Stomach (tissue), 19 donors: ENCODE measurements at regions of chr7 and their contacts with region 1.

Region 1: GRCh38 chr7:151168003-151168786 is 701 bp upstream of the GBX1 start:
- DNase-seq: peak; percentile 42 to 76
- H3K4me3 ChIP-seq: peak overlapping the region; percentile 46 to 66 (median 50)
- H3K27ac ChIP-seq: no peak overlapping the region
- H3K4me1 ChIP-seq: peaks cover 18 to 28% (median 23%) of the 10 kb centered on the region in 4 donors
- H3K27me3 ChIP-seq: peaks cover 16 to 93% (median 57%) of the 10 kb centered on the region in 3 donors
- CTCF ChIP-seq: peak in 4 of 7 experiments; percentile 31 to 70 (median 55)
- EP300 ChIP-seq: no peak
- POLR2A ChIP-seq: no peak

Region 2: DNA sequence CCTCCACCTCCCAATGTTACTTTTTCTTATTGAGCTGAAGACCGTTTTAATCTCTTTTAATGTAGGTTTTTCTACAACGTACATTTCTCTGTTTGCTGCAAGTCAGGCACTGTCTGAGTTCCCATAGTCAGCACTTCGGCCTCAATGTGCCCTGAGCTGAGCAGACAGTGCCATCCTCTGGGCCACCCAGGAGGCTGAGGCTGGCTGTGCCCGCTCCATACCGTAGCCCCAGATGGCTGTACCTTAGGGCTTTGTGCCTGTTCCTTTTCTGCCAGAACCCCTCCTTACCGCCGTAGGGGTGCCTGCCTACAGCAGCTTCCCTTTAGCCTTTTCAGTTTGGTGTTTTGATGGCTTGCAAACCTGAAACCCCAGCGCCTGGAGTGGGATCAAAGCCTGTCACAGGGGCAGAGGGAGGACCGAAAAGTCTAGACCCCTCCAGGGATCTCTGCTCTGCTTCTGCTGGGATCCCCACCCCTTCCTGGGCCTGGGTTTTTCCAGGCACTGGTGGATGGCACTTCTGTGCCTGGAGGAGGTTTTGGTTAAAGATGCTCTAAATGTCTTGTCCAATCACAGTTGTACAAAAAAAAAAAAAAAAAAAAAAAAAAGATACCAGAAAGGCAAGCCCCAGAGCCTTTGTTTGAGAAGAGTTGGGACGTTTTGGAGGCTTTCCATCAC is 72.9 kb before region 1 on chr7:
- intact Hi-C with region 1: no loop called
- DNase-seq: no peak
- H3K4me3 ChIP-seq: no peak overlapping the region
- H3K27ac ChIP-seq: peak overlapping the region in 1 of 5 donors; percentile 46
- H3K4me1 ChIP-seq: peaks cover under 1 to 56% (median 32%) of the 10 kb centered on the region in 4 donors
- H3K27me3 ChIP-seq: no peaks in the 10 kb centered on the region
- CTCF ChIP-seq: no peak
- EP300 ChIP-seq: no peak
- POLR2A ChIP-seq: no peak

Region 3: DNA sequence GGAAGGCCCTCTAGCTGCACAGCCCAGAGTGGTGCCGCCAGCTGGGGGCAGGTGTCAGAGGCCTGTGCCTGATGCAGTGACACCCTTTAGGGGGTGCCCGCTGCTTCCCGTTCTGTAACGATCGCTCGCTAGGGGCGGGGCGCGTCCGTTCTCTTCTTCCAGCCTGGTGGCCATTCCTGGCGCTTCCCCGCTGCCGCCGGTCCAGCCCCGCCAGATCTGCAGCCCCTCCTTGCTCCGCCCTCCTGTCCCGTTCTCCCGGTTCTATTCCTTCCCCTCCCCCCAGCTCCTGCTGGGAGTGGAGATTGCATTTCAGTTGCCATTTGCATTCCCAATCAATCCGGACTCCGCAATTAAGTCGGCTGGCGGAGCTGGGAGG is 42.7 kb before region 1 on chr7:
- intact Hi-C with region 1: loop called (anchors 5 kb)
- DNase-seq: peak; percentile 45 to 75
- H3K4me3 ChIP-seq: peak overlapping the region; percentile 40 to 48 (median 44)
- H3K27ac ChIP-seq: peak overlapping the region in 1 of 5 donors; percentile 13
- H3K4me1 ChIP-seq: peaks cover 14 to 32% (median 24%) of the 10 kb centered on the region in 4 donors
- H3K27me3 ChIP-seq: no peaks in the 10 kb centered on the region
- CTCF ChIP-seq: no peak
- EP300 ChIP-seq: no peak
- POLR2A ChIP-seq: no peak

Region 4: DNA sequence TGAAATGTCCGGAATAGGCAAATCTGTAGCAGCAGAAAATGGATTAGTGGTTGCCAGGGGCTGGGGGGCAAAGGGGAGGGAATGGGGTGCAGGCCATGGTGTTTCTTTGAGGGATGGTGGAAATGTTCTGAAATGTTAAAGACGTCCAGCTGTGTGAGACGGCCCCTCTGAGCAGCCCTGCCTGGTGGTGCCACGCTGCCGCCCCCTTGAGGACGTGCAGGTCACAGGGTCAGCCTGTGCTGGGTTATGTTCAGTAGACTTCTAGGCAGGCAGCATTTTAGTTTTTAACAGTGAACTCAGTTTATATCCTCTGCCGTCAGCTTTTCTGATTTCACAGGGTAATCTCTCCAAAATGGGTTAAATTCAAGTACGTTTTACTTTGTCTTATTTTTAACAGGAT is 182.8 kb after region 1 on chr7:
- intact Hi-C with region 1: no loop called
- DNase-seq: no peak
- H3K4me3 ChIP-seq: no peak overlapping the region
- H3K27ac ChIP-seq: peak overlapping the region in 2 of 5 donors; percentile 10 to 82
- H3K4me1 ChIP-seq: peaks cover 5 to 57% (median 13%) of the 10 kb centered on the region in 4 donors
- H3K27me3 ChIP-seq: no peaks in the 10 kb centered on the region
- CTCF ChIP-seq: no peak
- EP300 ChIP-seq: no peak
- POLR2A ChIP-seq: no peak